Activated naive CD4-positive, alpha-beta T cell treated with anti-CD3 and anti-CD28 coated beads, Interleukin-2, amount 10 ng/mL, durations not matched to agents 7 days and 5 days (primary cell): ENCODE measurements at regions of chr11 and their contacts with region 1.

Region 1: GRCh38 chr11:64742889-64743590 is 902 bp downstream of the RASGRP2 start:
- DNase-seq: peak; percentile 81
- H3K4me3 Mint-ChIP-seq: peak overlapping the region; percentile 96
- H3K27ac Mint-ChIP-seq: no peak overlapping the region
- H3K4me1 Mint-ChIP-seq: peaks cover 53% of the 10 kb centered on the region
- H3K27me3 Mint-ChIP-seq: peaks cover 4% of the 10 kb centered on the region

Region 2: GRCh38 chr11:64767344-64768299 is 24.6 kb after region 1 on chr11:
- CTCF ChIA-PET with region 1: interaction called, 208 read pairs
- DNase-seq: peak; percentile 91
- H3K4me3 Mint-ChIP-seq: peak overlapping the region; percentile 12
- H3K27ac Mint-ChIP-seq: peak overlapping the region; percentile 89
- H3K4me1 Mint-ChIP-seq: peaks cover 91% of the 10 kb centered on the region
- H3K27me3 Mint-ChIP-seq: no peaks in the 10 kb centered on the region

Region 3: DNA sequence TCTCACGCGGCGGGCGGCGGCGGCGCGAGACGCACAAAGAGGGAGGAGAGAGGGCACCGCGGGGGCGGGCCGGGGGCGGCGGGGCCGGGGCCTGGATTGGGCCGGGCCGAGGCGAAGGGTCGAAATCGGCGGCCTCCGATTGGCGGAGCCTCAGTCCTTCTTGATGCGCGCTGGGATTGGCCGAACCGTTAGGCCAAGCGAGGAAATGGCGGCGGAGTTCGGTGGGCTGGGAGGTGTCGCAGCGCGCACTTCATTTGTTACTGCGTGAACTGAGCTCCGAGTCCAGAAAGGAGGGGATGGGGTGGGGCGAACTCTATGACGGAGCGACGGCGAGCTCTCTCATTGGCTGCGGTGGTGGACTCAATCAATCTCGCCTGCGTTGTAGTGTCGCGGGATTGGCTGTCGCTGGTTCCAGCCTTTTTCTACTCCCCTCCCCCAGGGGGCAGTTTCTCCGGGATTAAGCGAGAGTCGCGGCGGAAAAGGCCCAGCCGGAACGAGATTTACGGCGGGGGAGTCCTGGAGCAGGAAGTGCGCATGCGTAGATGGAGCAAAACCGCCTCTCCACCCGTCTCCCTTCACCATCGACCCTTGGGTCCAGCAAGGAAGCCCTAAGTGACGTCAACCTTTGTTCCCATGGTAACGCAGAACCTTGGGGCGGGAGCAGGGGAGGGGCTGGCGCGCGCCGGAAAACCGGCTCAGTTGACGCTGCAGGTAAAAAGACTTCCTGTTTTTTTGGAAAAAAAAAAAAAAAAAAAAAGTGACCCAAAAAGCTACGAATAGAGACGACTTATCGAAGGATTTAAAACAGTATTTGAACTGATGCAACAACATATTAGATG is 35.7 kb after region 1 on chr11 and contains the start of gene SF1:
- CTCF ChIA-PET with region 1: interaction called, 39 read pairs
- DNase-seq: peak; percentile 100
- H3K4me3 Mint-ChIP-seq: peak within 1 kb of the TSS; percentile 96
- H3K27ac Mint-ChIP-seq: peak within 1 kb of the TSS; percentile 100
- H3K4me1 Mint-ChIP-seq: peaks cover 56% of the 10 kb centered on the region
- H3K27me3 Mint-ChIP-seq: no peaks in the 10 kb centered on the region